ENCODE measurements at regions of chr2 and their contacts with region 1.

Region 1: DNA sequence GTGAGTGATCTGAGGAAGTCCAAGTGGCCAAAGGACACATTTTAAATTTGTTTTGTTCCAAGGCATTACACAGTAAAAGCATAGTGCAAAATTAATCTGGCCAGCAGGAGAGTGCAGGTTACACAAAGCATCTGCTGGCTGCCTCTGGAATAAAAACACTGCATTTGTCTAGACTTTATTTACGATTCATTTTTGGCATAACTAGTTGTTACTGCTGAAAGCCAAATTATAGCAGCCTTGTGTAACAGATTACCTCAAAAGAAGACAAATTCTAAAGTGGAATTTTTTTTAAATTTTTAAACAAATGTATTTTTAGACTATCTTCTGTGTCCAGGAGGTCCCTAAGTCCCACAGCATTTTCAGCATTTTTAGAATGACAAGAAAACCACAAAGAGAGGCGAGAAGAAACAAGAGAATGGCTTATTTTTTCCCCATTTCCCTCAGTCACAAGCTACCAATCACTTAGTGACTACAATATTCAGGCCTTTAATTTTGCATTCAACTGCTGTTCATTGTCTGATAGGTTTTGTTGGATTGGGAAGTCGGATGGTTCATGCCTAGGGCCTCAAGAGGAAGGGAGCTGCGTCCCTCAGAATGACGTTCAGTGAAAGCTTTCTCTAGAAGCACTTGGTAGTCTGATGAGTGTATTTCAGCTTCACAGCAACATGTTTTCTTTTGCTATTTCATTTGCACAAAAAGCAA is 46.0 kb downstream of the TMEFF2 start:
- DNase-seq: no peak
- H3K4me3 Mint-ChIP-seq: no peak overlapping the region
- H3K27ac Mint-ChIP-seq: no peak overlapping the region
- H3K4me1 Mint-ChIP-seq: no peaks in the 10 kb centered on the region
- H3K27me3 Mint-ChIP-seq: no peaks in the 10 kb centered on the region
- CTCF ChIP-seq: no peak

Region 2: GRCh38 chr2:191942090-191942738 is 206.6 kb before region 1 on chr2:
- CTCF ChIA-PET with region 1: no interaction called
- intact Hi-C with region 1: loop called (anchors 10 kb)
- DNase-seq: no peak
- H3K4me3 Mint-ChIP-seq: no peak overlapping the region
- H3K27ac Mint-ChIP-seq: no peak overlapping the region
- H3K4me1 Mint-ChIP-seq: no peaks in the 10 kb centered on the region
- H3K27me3 Mint-ChIP-seq: no peaks in the 10 kb centered on the region
- CTCF ChIP-seq: no peak

Region 3: GRCh38 chr2:192123847-192124246 is 24.9 kb before region 1 on chr2:
- CTCF ChIA-PET with region 1: no interaction called
- intact Hi-C with region 1: no loop called
- DNase-seq: no peak
- H3K4me3 Mint-ChIP-seq: no peak overlapping the region
- H3K27ac Mint-ChIP-seq: no peak overlapping the region
- H3K4me1 Mint-ChIP-seq: no peaks in the 10 kb centered on the region
- H3K27me3 Mint-ChIP-seq: no peaks in the 10 kb centered on the region
- CTCF ChIP-seq: no peak

Measured in Calu3 (cell line).